Mammary epithelial cell (primary cell): ENCODE measurements at regions of chr1 and their contacts with region 1.

Region 1: GRCh38 chr1:50605186-50605875 is 182.1 kb upstream of the DMRTA2 start:
- DNase-seq: peak; percentile 46
- H3K4me3 ChIP-seq: no peak overlapping the region
- H3K27ac ChIP-seq: no peak overlapping the region
- H3K4me1 ChIP-seq: peaks cover 27% of the 10 kb centered on the region
- H3K27me3 ChIP-seq: no peaks in the 10 kb centered on the region
- CTCF ChIP-seq: peak; percentile 76 to 77

Region 2: DNA sequence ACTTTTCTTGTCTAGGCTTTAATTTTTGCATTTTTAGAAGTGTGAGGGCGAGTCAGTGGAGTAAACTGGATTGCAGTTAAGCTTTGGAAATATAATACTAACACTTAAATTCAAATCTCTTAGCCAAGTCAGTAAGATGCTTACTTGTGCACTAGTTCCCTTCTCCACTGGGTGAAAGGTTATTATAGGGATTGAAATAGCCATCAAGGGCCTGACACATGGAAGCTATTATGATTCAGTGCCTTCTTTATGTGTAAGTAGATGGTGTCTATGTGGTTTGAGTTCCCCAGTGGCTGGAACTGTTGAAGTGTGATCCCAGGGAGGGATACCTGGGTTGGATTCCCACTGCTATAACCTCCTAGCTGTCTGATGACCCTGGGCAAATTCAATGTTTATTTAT is 157.4 kb before region 1 on chr1:
- CTCF ChIA-PET with region 1: interaction called, 16 read pairs
- dilution Hi-C with region 1: no loop called
- in situ Hi-C with region 1: no loop called
- intact Hi-C with region 1: no loop called
- DNase-seq: no peak
- H3K4me3 ChIP-seq: no peak overlapping the region
- H3K27ac ChIP-seq: no peak overlapping the region
- H3K4me1 ChIP-seq: no peaks in the 10 kb centered on the region
- H3K27me3 ChIP-seq: no peaks in the 10 kb centered on the region
- CTCF ChIP-seq: no peak